Activated CD4-positive, alpha-beta T cell treated with anti-CD3 and anti-CD28 coated beads for 36 hours (primary cell): ENCODE measurements at regions of chr16 and their contacts with region 1.

Region 1: DNA sequence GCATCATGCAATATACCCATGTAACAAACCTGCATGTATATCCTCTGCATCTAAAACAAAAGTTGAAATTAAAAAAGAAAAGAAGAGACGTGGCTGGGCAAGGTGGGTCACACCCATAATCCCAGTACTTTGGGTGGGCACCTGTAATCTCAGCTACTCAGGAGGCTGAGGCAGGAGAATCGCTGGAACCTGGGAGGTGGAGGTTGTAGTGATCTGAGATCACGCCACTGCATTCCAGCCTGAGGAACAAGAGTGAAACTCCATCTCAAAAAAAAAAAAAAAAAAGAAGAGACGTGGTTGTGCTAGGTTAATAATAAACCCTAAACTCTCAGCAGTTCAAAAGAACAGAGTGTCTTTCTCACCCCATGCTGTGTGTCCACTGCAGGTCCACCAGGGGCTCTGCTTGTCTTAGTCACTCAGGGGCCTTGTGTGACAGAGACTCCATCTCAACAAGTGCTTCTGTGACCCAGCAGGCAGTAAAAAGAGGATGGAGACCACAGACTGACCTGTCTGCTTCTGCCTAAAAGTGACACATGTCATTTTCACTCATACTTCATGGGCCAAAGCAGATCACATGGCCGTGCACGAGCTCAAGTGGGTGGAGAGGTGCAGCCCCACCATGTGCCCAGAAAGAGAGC is 22.3 kb upstream of the N4BP1 start:
- DNase-seq: no peak
- ATAC-seq: no peak
- H3K4me3 Mint-ChIP-seq: no peak overlapping the region
- H3K27ac Mint-ChIP-seq: no peak overlapping the region
- H3K4me1 Mint-ChIP-seq: peaks cover 8% of the 10 kb centered on the region
- H3K27me3 Mint-ChIP-seq: peaks cover 2% of the 10 kb centered on the region

Region 2: GRCh38 chr16:48244080-48244862 is 388.0 kb before region 1 on chr16 and contains the start of gene LONP2:
- CTCF ChIA-PET with region 1: interaction called, 3 read pairs
- POLR2A ChIA-PET with region 1: no interaction called
- intact Hi-C with region 1: loop called in 1 of 2 experiments (anchors 5 kb)
- DNase-seq: peak; percentile 95
- ATAC-seq: peak; percentile 94
- H3K4me3 Mint-ChIP-seq: peak within 1 kb of the TSS; percentile 91
- H3K27ac Mint-ChIP-seq: peak within 1 kb of the TSS; percentile 88
- H3K4me1 Mint-ChIP-seq: peaks cover 36% of the 10 kb centered on the region
- H3K27me3 Mint-ChIP-seq: no peaks in the 10 kb centered on the region
- total RNA-seq, gene LONP2: 60.3 to 63.2 TPM

Region 3: DNA sequence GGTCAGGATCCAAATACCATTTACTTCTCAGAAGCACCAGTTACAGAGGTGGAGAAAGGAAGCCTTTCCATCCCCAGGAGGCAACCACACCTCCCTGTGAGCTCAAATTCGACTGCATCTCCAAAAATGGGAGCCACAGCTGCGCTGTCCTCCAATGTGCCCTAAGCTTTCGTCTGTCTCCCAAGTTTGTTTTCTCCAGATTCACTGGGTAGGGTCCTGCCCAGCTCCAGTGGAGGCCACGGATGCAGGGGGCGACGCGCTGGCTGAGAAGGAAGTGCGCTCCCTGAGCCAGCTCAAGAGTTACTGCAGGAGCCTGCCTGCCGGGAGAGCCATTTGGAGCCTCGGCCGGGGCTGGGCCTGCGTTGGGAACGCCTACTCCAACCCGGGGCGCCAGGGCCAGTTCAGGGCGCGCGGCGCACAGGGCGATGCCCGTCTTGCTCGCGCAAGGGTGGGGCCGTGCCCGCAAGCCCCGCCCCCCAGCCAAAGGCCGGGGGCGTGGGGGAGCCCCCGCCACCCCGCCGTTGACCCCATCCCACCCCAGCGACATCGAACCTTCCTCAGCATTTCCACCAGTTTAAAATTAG is 266.6 kb before region 1 on chr16:
- CTCF ChIA-PET with region 1: interaction called, 13 read pairs
- POLR2A ChIA-PET with region 1: interaction called, 4 read pairs
- intact Hi-C with region 1: loop called in 1 of 2 experiments (anchors 1 kb)
- DNase-seq: peak; percentile 93
- ATAC-seq: peak; percentile 96
- H3K4me3 Mint-ChIP-seq: peak overlapping the region; percentile 90
- H3K27ac Mint-ChIP-seq: peak overlapping the region; percentile 99
- H3K4me1 Mint-ChIP-seq: peaks cover 56% of the 10 kb centered on the region
- H3K27me3 Mint-ChIP-seq: no peaks in the 10 kb centered on the region

Region 4: DNA sequence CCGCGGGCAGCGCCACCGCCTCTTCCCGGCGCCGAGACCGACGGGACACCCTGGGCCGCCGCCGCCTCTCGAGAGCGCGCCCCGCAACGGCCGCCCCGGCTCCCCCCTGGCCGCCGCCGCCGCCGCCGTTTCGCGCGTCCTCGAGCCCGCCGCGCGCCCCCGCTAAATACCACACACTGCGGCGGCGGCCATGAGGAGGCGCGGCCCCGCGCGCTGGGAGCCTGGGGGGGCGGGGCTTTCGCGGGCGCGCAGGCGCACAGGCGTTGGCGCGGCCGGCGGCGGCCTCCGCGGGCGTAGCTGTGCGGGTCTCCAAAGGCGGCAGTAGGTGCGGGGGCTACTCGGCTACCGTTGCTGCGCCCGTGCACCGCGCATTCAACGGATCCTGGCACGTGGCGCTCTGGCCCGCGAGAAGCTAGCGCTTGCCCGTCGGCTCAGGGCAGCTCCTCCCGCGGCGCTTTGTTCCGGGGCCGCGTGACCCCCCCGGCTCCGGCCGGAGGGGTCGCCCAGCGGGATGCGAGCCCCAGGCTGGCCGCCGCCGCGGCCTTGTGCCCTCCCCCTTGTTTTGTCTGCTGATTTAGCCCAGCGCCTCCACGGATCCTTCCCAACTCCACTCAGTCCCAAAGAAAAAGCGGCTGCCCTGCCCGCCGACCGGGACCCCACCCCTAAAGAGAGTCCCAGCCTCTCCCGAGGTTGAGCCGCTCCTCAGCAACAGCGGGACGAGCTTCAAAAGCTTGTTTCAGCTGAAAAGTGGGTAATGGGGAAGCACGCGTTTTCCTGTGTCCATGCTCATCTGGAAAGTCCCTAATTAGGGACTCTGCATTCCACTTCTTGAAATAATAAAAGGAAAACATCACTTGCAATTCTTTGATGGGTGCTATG is 246.7 kb before region 1 on chr16 and contains the start of gene SIAH1:
- CTCF ChIA-PET with region 1: no interaction called
- POLR2A ChIA-PET with region 1: no interaction called
- intact Hi-C with region 1: loop called in 1 of 2 experiments (anchors 1 kb)
- DNase-seq: peak; percentile 91
- ATAC-seq: peak; percentile 82
- H3K4me3 Mint-ChIP-seq: peak within 1 kb of the TSS; percentile 85
- H3K27ac Mint-ChIP-seq: peak within 1 kb of the TSS; percentile 90
- H3K4me1 Mint-ChIP-seq: peaks cover 21% of the 10 kb centered on the region
- H3K27me3 Mint-ChIP-seq: no peaks in the 10 kb centered on the region
- total RNA-seq, gene SIAH1: 13.1 to 13.3 TPM

Region 5: GRCh38 chr16:48459167-48459566 is 173.1 kb before region 1 on chr16:
- CTCF ChIA-PET with region 1: interaction called, 8 read pairs
- POLR2A ChIA-PET with region 1: no interaction called
- intact Hi-C with region 1: loop called (anchors 1 to 5 kb)
- DNase-seq: no peak
- ATAC-seq: no peak
- H3K4me3 Mint-ChIP-seq: no peak overlapping the region
- H3K27ac Mint-ChIP-seq: no peak overlapping the region
- H3K4me1 Mint-ChIP-seq: peaks cover 9% of the 10 kb centered on the region
- H3K27me3 Mint-ChIP-seq: peaks cover 35% of the 10 kb centered on the region

Region 6: DNA sequence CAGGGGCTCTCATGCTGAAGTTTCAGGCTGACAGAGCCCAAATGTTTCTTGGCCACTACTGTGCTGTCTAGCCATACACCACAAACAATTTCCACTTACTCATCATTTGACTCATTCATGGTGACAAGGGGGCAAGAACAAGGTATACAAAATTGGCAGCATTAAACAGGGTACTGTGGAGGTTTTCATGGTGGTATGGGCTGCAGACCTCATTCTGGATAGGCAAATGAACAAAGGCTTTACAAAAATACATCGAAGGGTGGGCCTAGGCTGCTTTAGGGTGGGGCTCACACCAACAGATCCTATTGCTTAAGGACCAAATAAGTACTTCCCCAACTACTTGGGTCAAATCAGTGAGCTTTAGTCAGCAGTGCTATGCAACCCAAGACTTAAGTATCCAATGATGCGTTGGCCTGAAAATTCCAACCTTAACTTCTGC is 75.3 kb before region 1 on chr16:
- CTCF ChIA-PET with region 1: interaction called, 7 read pairs
- POLR2A ChIA-PET with region 1: no interaction called
- intact Hi-C with region 1: loop called in 1 of 2 experiments (anchors 2 kb)
- DNase-seq: peak; percentile 52
- ATAC-seq: peak; percentile 89
- H3K4me3 Mint-ChIP-seq: no peak overlapping the region
- H3K27ac Mint-ChIP-seq: peak overlapping the region; percentile 64
- H3K4me1 Mint-ChIP-seq: peaks cover 83% of the 10 kb centered on the region
- H3K27me3 Mint-ChIP-seq: no peaks in the 10 kb centered on the region